ENCODE measurements at regions of chr6 and their contacts with region 1.

Region 1: DNA sequence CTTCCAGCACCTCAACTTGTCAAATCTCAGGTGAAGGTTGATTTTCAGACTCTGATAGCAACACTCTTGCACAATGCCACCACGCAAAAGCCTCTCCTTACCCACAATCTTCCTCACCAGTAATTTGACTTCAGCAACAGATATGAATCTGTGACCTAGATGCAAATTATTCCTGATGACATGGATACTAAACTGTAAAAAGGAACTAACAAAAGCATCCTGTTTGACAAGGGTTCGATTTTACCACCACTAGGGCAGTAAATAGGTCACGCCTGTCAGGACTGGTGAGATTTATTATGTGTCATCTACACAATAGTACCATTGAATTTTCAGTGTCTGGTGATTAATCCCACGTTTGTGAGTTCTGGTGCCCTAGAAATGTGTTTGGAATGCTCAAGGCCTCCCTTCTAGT is 134.5 kb upstream of the COL21A1 start:
- DNase-seq: no peak
- H3K4me3 ChIP-seq: no peak overlapping the region
- H3K27ac ChIP-seq: peak overlapping the region in 2 of 4 donors; percentile 36 to 43
- H3K4me1 ChIP-seq: peaks cover 4 to 42% (median 10%) of the 10 kb centered on the region in 3 donors
- H3K27me3 ChIP-seq: no peaks in the 10 kb centered on the region
- CTCF ChIP-seq: peak in 1 of 6 experiments; percentile 10
- POLR2A ChIP-seq: no peak

Region 2: GRCh38 chr6:56437171-56437900 is 55.5 kb after region 1 on chr6:
- intact Hi-C with region 1: loop called (anchors 10 kb)
- DNase-seq: no peak
- H3K4me3 ChIP-seq: no peak overlapping the region
- H3K27ac ChIP-seq: no peak overlapping the region
- H3K4me1 ChIP-seq: peaks cover 0 to 8% (median 0%) of the 10 kb centered on the region in 3 donors
- H3K27me3 ChIP-seq: no peaks in the 10 kb centered on the region
- CTCF ChIP-seq: no peak
- POLR2A ChIP-seq: no peak

Measured in esophagus squamous epithelium (tissue), 5 donors.